GM12878 (cell line): ENCODE measurements at regions of chr18 and their contacts with region 1.

Region 1: DNA sequence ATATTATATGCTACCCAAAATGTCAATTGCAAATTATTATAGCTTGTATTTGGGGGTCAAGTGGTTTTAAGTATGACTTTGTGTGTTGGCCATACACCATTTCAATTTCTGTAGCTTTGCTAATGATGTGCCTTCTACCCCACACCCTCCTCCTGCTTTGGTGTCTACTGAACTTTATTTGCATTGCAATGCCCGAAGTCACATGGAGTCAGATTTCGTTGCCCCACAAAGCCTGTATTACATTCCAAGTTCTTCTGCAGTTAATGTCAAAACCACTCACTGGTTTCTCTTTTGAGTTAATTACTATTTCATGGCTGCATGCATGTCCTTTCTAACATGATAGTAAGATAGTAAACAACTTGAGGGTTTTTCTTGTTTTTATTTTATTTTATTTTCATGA is 528.9 kb downstream of the RIT2 start:
- DNase-seq: no peak
- ATAC-seq: no peak
- H3K4me3 ChIP-seq: no peak overlapping the region
- H3K27ac ChIP-seq: no peak overlapping the region
- H3K4me1 ChIP-seq: no peaks in the 10 kb centered on the region
- H3K27me3 ChIP-seq: no peaks in the 10 kb centered on the region
- CTCF ChIP-seq: no peak
- EP300 ChIP-seq: no peak
- POLR2A ChIP-seq: no peak
- RAD21 ChIP-seq: no peak

Region 2: GRCh38 chr18:42509702-42510415 is 76.7 kb before region 1 on chr18:
- CTCF ChIA-PET with region 1: no interaction called
- POLR2A ChIA-PET with region 1: no interaction called
- RAD21 ChIA-PET with region 1: no interaction called
- SMC1A ChIA-PET with region 1: no interaction called
- in situ Hi-C with region 1: no loop called
- intact Hi-C with region 1: no loop called
- DNase-seq: peak; percentile 23
- ATAC-seq: peak; percentile 92
- H3K4me3 ChIP-seq: no peak overlapping the region
- H3K27ac ChIP-seq: no peak overlapping the region
- H3K4me1 ChIP-seq: no peaks in the 10 kb centered on the region
- H3K27me3 ChIP-seq: no peaks in the 10 kb centered on the region
- CTCF ChIP-seq: no peak
- EP300 ChIP-seq: peak in 1 of 2 experiments; percentile 37; a peak in 1 of 4 replicates
- POLR2A ChIP-seq: no peak
- RAD21 ChIP-seq: no peak

Region 3: GRCh38 chr18:42850174-42851083 is 263.8 kb after region 1 on chr18:
- CTCF ChIA-PET with region 1: no interaction called
- POLR2A ChIA-PET with region 1: no interaction called
- RAD21 ChIA-PET with region 1: no interaction called
- SMC1A ChIA-PET with region 1: no interaction called
- in situ Hi-C with region 1: no loop called
- intact Hi-C with region 1: no loop called
- DNase-seq: no peak
- ATAC-seq: no peak
- H3K4me3 ChIP-seq: no peak overlapping the region
- H3K27ac ChIP-seq: no peak overlapping the region
- H3K4me1 ChIP-seq: no peaks in the 10 kb centered on the region
- H3K27me3 ChIP-seq: no peaks in the 10 kb centered on the region
- CTCF ChIP-seq: no peak
- EP300 ChIP-seq: no peak
- POLR2A ChIP-seq: no peak
- RAD21 ChIP-seq: no peak

Region 4: GRCh38 chr18:43563780-43564179 is 977.2 kb after region 1 on chr18:
- CTCF ChIA-PET with region 1: no interaction called
- POLR2A ChIA-PET with region 1: no interaction called
- RAD21 ChIA-PET with region 1: no interaction called
- SMC1A ChIA-PET with region 1: no interaction called
- in situ Hi-C with region 1: no loop called
- intact Hi-C with region 1: loop called (anchors 10 kb)
- DNase-seq: no peak
- ATAC-seq: peak; percentile 69
- H3K4me3 ChIP-seq: no peak overlapping the region
- H3K27ac ChIP-seq: no peak overlapping the region
- H3K4me1 ChIP-seq: no peaks in the 10 kb centered on the region
- H3K27me3 ChIP-seq: no peaks in the 10 kb centered on the region
- CTCF ChIP-seq: peak in 2 of 3 experiments; percentile 19 to 44; a peak in 3 of 6 replicates
- EP300 ChIP-seq: no peak
- POLR2A ChIP-seq: no peak
- RAD21 ChIP-seq: peak; percentile 57

Region 5: GRCh38 chr18:43587538-43588153 is 1001.0 kb after region 1 on chr18:
- CTCF ChIA-PET with region 1: no interaction called
- POLR2A ChIA-PET with region 1: no interaction called
- RAD21 ChIA-PET with region 1: no interaction called
- SMC1A ChIA-PET with region 1: no interaction called
- in situ Hi-C with region 1: loop called (anchors 10 kb)
- intact Hi-C with region 1: no loop called
- DNase-seq: no peak
- ATAC-seq: peak; percentile 67
- H3K4me3 ChIP-seq: no peak overlapping the region
- H3K27ac ChIP-seq: no peak overlapping the region
- H3K4me1 ChIP-seq: no peaks in the 10 kb centered on the region
- H3K27me3 ChIP-seq: no peaks in the 10 kb centered on the region
- CTCF ChIP-seq: peak; percentile 51 to 65 (median 59)
- EP300 ChIP-seq: no peak
- POLR2A ChIP-seq: no peak
- RAD21 ChIP-seq: peak; percentile 53